ENCODE measurements at regions of chr6 and their contacts with region 1.

Region 1: GRCh38 chr6:28542440-28543296 is 17.0 kb downstream of the GPX5 start:
- DNase-seq: peak; percentile 80
- ATAC-seq: peak; percentile 62
- H3K4me3 Mint-ChIP-seq: peak overlapping the region; percentile 72
- H3K27ac Mint-ChIP-seq: peak overlapping the region; percentile 75
- H3K4me1 Mint-ChIP-seq: peaks cover 36% of the 10 kb centered on the region
- H3K27me3 Mint-ChIP-seq: peaks cover 38% of the 10 kb centered on the region

Region 2: DNA sequence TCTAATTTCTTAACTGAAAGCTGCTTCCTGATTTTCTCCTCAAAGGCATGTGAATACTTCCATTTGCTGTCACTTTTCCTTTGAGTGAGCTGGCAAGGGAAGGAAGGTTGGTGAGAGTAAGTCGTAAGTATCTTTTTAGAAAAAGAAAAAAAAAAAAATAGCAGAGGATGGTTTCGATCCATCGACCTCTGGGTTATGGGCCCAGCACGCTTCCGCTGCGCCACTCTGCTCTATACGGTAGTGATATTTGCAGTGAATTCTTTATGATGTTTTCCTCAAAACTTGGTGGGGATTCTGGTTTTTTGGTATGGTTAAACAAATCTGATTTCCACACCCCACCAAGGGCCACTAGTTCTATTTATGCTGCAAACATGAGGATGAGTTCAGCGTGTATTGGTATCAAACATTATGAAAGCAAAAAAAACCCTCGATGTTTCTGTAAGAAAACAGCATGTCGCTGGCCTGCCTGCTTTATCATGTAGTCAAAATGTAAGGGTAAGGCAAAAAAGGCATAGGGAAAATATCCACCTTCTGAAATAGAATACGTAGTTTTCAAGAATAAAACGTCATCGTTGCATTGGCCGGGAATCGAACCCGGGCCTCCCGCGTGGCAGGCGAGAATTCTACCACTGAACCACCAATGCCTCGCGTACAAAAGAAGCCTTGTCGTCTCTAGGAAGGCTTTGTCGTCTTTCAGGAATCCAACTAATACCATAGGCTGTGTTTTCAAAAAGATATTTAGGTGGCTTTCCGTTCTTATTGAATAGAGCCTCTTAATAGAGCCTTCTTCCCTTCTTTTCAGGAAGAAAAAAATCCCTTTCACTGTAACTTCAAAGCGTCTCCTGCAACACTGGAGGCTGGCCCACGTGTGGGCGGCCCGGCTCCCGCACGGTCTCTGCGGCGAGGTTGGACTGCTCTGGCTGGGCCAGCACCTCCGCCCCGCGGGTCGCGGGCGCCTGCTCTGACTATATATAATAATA is 640.0 kb before region 1 on chr6:
- CTCF ChIA-PET with region 1: no interaction called
- POLR2A ChIA-PET with region 1: no interaction called
- intact Hi-C with region 1: loop called in 1 of 2 experiments (anchors 2 kb)
- DNase-seq: peak; percentile 91
- ATAC-seq: peak; percentile 81
- H3K4me3 Mint-ChIP-seq: peak overlapping the region; percentile 74
- H3K27ac Mint-ChIP-seq: peak overlapping the region; percentile 89
- H3K4me1 Mint-ChIP-seq: peaks cover 5% of the 10 kb centered on the region
- H3K27me3 Mint-ChIP-seq: peaks cover 4% of the 10 kb centered on the region

Region 3: GRCh38 chr6:27957516-27957915 is 585.2 kb before region 1 on chr6:
- CTCF ChIA-PET with region 1: no interaction called
- POLR2A ChIA-PET with region 1: no interaction called
- intact Hi-C with region 1: no loop called
- DNase-seq: no peak
- ATAC-seq: no peak
- H3K4me3 Mint-ChIP-seq: no peak overlapping the region
- H3K27ac Mint-ChIP-seq: no peak overlapping the region
- H3K4me1 Mint-ChIP-seq: no peaks in the 10 kb centered on the region
- H3K27me3 Mint-ChIP-seq: peaks cover 37% of the 10 kb centered on the region

Region 4: GRCh38 chr6:28399350-28400121 is 143.1 kb before region 1 on chr6 and contains the start of gene ZSCAN12:
- CTCF ChIA-PET with region 1: interaction called, 4 read pairs
- POLR2A ChIA-PET with region 1: no interaction called
- intact Hi-C with region 1: loop called in 1 of 2 experiments (anchors 1 kb)
- DNase-seq: peak; percentile 92
- ATAC-seq: peak; percentile 91
- H3K4me3 Mint-ChIP-seq: peak within 1 kb of the TSS; percentile 89
- H3K27ac Mint-ChIP-seq: peak within 1 kb of the TSS; percentile 92
- H3K4me1 Mint-ChIP-seq: peaks cover 42% of the 10 kb centered on the region
- H3K27me3 Mint-ChIP-seq: peaks cover 15% of the 10 kb centered on the region
- total RNA-seq, gene ZSCAN12: 6.9 to 7.6 TPM

Region 5: GRCh38 chr6:28478518-28478917 is 64.2 kb before region 1 on chr6:
- CTCF ChIA-PET with region 1: no interaction called
- POLR2A ChIA-PET with region 1: no interaction called
- intact Hi-C with region 1: no loop called
- DNase-seq: no peak
- ATAC-seq: no peak
- H3K4me3 Mint-ChIP-seq: no peak overlapping the region
- H3K27ac Mint-ChIP-seq: no peak overlapping the region
- H3K4me1 Mint-ChIP-seq: peaks cover 11% of the 10 kb centered on the region
- H3K27me3 Mint-ChIP-seq: peaks cover 57% of the 10 kb centered on the region

Region 6: GRCh38 chr6:28489366-28490204 is 53.1 kb before region 1 on chr6:
- CTCF ChIA-PET with region 1: interaction called, 3 read pairs
- POLR2A ChIA-PET with region 1: no interaction called
- intact Hi-C with region 1: loop called in 1 of 2 experiments (anchors 1 kb)
- DNase-seq: peak; percentile 80
- ATAC-seq: peak; percentile 80
- H3K4me3 Mint-ChIP-seq: peak overlapping the region; percentile 72
- H3K27ac Mint-ChIP-seq: peak overlapping the region; percentile 79
- H3K4me1 Mint-ChIP-seq: peaks cover 16% of the 10 kb centered on the region
- H3K27me3 Mint-ChIP-seq: peaks cover 44% of the 10 kb centered on the region

Region 7: GRCh38 chr6:28606424-28607400 is 64.0 kb after region 1 on chr6:
- CTCF ChIA-PET with region 1: interaction called, 3 read pairs
- POLR2A ChIA-PET with region 1: no interaction called
- intact Hi-C with region 1: loop called in 1 of 2 experiments (anchors 2 kb)
- DNase-seq: peak; percentile 75
- ATAC-seq: peak; percentile 87
- H3K4me3 Mint-ChIP-seq: peak overlapping the region; percentile 66
- H3K27ac Mint-ChIP-seq: peak overlapping the region; percentile 55
- H3K4me1 Mint-ChIP-seq: peaks cover 6% of the 10 kb centered on the region
- H3K27me3 Mint-ChIP-seq: peaks cover 41% of the 10 kb centered on the region

Region 8: GRCh38 chr6:28683944-28684538 is 141.4 kb after region 1 on chr6:
- CTCF ChIA-PET with region 1: no interaction called
- POLR2A ChIA-PET with region 1: no interaction called
- intact Hi-C with region 1: loop called in 1 of 2 experiments (anchors 5 kb)
- DNase-seq: peak; percentile 13
- ATAC-seq: peak; percentile 53
- H3K4me3 Mint-ChIP-seq: no peak overlapping the region
- H3K27ac Mint-ChIP-seq: no peak overlapping the region
- H3K4me1 Mint-ChIP-seq: peaks cover 6% of the 10 kb centered on the region
- H3K27me3 Mint-ChIP-seq: peaks cover 54% of the 10 kb centered on the region

Region 9: DNA sequence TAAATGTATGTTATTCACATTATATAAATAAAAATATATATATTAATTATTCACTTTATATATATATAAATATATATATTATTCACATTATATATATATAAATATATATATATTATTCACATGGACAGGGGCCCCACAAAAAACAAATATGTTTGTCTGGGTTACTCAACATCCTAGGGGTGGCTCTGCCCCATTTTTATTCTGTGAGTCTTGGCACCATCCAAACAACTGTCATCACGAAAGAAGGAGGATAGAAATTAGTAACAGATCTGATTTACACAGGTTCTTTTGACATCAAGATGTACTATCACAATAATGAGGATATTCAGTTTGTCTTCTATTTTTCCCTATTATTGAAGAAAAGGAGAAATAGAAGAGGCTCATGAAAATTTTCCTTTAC is 170.3 kb after region 1 on chr6:
- CTCF ChIA-PET with region 1: no interaction called
- POLR2A ChIA-PET with region 1: no interaction called
- intact Hi-C with region 1: no loop called
- DNase-seq: no peak
- ATAC-seq: peak; percentile 35
- H3K4me3 Mint-ChIP-seq: no peak overlapping the region
- H3K27ac Mint-ChIP-seq: no peak overlapping the region
- H3K4me1 Mint-ChIP-seq: peaks cover 4% of the 10 kb centered on the region
- H3K27me3 Mint-ChIP-seq: peaks cover 49% of the 10 kb centered on the region